CD4-positive, alpha-beta memory T cell (primary cell): ENCODE measurements at regions of chr16 and their contacts with region 1.

Region 1: GRCh38 chr16:56281256-56281805 is 90.0 kb downstream of the GNAO1 start:
- DNase-seq: no peak
- H3K4me3 ChIP-seq: no peak overlapping the region
- H3K4me3 Mint-ChIP-seq: no peak overlapping the region
- H3K27ac ChIP-seq: no peak overlapping the region
- H3K27ac Mint-ChIP-seq: peak overlapping the region in 4 of 7 donors; percentile 35 to 74 (median 58)
- H3K4me1 ChIP-seq: peaks cover 38% of the 10 kb centered on the region
- H3K4me1 Mint-ChIP-seq: peaks cover 26 to 44% (median 36%) of the 10 kb centered on the region in 4 donors
- H3K27me3 ChIP-seq: no peaks in the 10 kb centered on the region
- H3K27me3 Mint-ChIP-seq: no peaks in the 10 kb centered on the region

Region 2: DNA sequence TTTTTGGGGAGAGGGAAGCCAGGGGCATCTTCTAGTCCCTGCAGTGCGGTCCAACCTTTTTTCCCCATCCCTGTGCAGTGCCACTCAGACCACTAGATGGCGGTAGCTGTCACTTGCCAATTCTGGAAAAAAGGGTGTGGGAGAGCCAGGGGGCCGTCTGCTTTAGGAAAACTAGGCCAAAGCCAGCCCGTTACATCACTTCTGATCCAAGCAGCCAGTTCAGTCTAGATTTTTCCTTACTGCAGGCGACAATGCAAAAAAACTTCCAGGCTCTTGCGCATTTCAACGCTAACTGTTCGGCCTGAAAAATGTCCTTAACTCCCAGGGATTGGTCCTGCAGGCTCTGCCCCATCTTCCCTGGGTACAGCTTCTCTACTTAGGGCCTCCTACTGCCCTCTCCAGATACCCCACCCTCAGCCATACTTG is 336.9 kb before region 1 on chr16:
- CTCF ChIA-PET with region 1: interaction called, 15 read pairs
- POLR2A ChIA-PET with region 1: no interaction called
- intact Hi-C with region 1: no loop called
- DNase-seq: peak; percentile 40 to 48 (median 44)
- H3K4me3 ChIP-seq: no peak overlapping the region
- H3K4me3 Mint-ChIP-seq: no peak overlapping the region
- H3K27ac ChIP-seq: no peak overlapping the region
- H3K27ac Mint-ChIP-seq: no peak overlapping the region
- H3K4me1 ChIP-seq: no peaks in the 10 kb centered on the region
- H3K4me1 Mint-ChIP-seq: peaks cover 0 to 2% (median 0%) of the 10 kb centered on the region in 4 donors
- H3K27me3 ChIP-seq: no peaks in the 10 kb centered on the region
- H3K27me3 Mint-ChIP-seq: peaks cover 39 to 40% of the 10 kb centered on the region in 2 donors

Region 3: GRCh38 chr16:56041686-56042085 is 239.6 kb before region 1 on chr16:
- CTCF ChIA-PET with region 1: interaction called, 19 read pairs
- POLR2A ChIA-PET with region 1: no interaction called
- intact Hi-C with region 1: no loop called
- DNase-seq: peak in 4 of 5 donors; percentile 25 to 47 (median 36)
- H3K4me3 ChIP-seq: no peak overlapping the region
- H3K4me3 Mint-ChIP-seq: no peak overlapping the region
- H3K27ac ChIP-seq: no peak overlapping the region
- H3K27ac Mint-ChIP-seq: no peak overlapping the region
- H3K4me1 ChIP-seq: no peaks in the 10 kb centered on the region
- H3K4me1 Mint-ChIP-seq: no peaks in the 10 kb centered on the region
- H3K27me3 ChIP-seq: no peaks in the 10 kb centered on the region
- H3K27me3 Mint-ChIP-seq: peaks cover 0 to 4% of the 10 kb centered on the region in 2 donors

Region 4: GRCh38 chr16:56137269-56137668 is 144.1 kb before region 1 on chr16:
- CTCF ChIA-PET with region 1: no interaction called
- POLR2A ChIA-PET with region 1: no interaction called
- intact Hi-C with region 1: no loop called
- DNase-seq: no peak
- H3K4me3 ChIP-seq: no peak overlapping the region
- H3K4me3 Mint-ChIP-seq: peak overlapping the region; percentile 7 to 68 (median 36)
- H3K27ac ChIP-seq: no peak overlapping the region
- H3K27ac Mint-ChIP-seq: peak overlapping the region in 2 of 7 donors; percentile 3 to 15
- H3K4me1 ChIP-seq: peaks cover 6% of the 10 kb centered on the region
- H3K4me1 Mint-ChIP-seq: peaks cover 7 to 9% (median 8%) of the 10 kb centered on the region in 4 donors
- H3K27me3 ChIP-seq: no peaks in the 10 kb centered on the region
- H3K27me3 Mint-ChIP-seq: peaks cover 0 to 3% of the 10 kb centered on the region in 2 donors

Region 5: DNA sequence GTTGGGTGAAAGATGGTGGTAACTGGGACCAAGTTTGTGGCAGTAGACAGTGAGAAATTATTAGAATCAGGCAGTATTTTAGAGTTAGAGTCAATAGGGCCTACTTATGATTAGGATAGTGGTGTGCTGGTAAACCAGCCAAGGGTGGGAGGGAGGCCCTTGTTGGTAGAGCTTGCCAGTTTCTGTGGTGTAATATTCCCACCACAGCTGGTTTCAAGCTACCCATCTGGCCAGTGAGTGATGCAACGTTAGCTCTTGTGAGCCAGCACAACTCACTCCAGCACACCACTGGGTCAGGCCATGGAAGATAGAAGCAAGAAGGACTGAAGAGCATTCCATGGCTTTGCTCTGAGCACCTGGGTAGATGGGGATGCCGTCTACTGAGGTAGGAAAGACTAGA is 55.1 kb before region 1 on chr16:
- CTCF ChIA-PET with region 1: interaction called, 9 read pairs
- POLR2A ChIA-PET with region 1: interaction called, 3 read pairs
- intact Hi-C with region 1: loop called (anchors 5 kb)
- DNase-seq: no peak
- H3K4me3 ChIP-seq: no peak overlapping the region
- H3K4me3 Mint-ChIP-seq: peak overlapping the region in 7 of 8 donors; percentile 73 to 90 (median 84)
- H3K27ac ChIP-seq: no peak overlapping the region
- H3K27ac Mint-ChIP-seq: peak overlapping the region; percentile 73 to 94 (median 83)
- H3K4me1 ChIP-seq: peaks cover 38% of the 10 kb centered on the region
- H3K4me1 Mint-ChIP-seq: peaks cover 35 to 49% (median 41%) of the 10 kb centered on the region in 4 donors
- H3K27me3 ChIP-seq: no peaks in the 10 kb centered on the region
- H3K27me3 Mint-ChIP-seq: no peaks in the 10 kb centered on the region

Region 6: DNA sequence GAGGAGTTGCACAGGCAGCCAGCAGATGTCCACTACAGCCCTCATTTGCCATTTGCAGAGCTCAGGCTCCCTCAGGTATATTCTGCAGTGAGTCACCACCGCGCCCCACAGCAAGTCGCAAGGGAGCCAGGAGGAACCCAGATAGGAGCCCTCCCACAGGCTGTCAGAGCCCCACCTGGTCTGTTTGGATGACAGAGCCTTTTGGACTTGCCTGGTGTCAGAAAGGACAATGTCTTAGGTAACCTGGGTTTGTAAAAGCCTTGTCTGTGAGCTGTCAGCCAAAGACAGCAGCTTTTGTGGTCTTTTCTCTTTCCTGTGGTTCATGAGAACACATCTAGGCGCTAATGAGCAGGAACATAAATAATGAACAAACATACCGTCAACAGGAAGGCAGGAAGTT is 19.2 kb before region 1 on chr16:
- CTCF ChIA-PET with region 1: interaction called, 57 read pairs
- POLR2A ChIA-PET with region 1: interaction called, 78 read pairs
- intact Hi-C with region 1: loop called (anchors 1 kb)
- DNase-seq: peak; percentile 74 to 88 (median 84)
- H3K4me3 ChIP-seq: peak overlapping the region; percentile 2 to 45
- H3K4me3 Mint-ChIP-seq: peak overlapping the region; percentile 47 to 82 (median 65)
- H3K27ac ChIP-seq: peak overlapping the region; percentile 45
- H3K27ac Mint-ChIP-seq: peak overlapping the region; percentile 77 to 97 (median 89)
- H3K4me1 ChIP-seq: peaks cover 59% of the 10 kb centered on the region
- H3K4me1 Mint-ChIP-seq: peaks cover 36 to 75% (median 52%) of the 10 kb centered on the region in 4 donors
- H3K27me3 ChIP-seq: no peaks in the 10 kb centered on the region
- H3K27me3 Mint-ChIP-seq: no peaks in the 10 kb centered on the region

Region 7: DNA sequence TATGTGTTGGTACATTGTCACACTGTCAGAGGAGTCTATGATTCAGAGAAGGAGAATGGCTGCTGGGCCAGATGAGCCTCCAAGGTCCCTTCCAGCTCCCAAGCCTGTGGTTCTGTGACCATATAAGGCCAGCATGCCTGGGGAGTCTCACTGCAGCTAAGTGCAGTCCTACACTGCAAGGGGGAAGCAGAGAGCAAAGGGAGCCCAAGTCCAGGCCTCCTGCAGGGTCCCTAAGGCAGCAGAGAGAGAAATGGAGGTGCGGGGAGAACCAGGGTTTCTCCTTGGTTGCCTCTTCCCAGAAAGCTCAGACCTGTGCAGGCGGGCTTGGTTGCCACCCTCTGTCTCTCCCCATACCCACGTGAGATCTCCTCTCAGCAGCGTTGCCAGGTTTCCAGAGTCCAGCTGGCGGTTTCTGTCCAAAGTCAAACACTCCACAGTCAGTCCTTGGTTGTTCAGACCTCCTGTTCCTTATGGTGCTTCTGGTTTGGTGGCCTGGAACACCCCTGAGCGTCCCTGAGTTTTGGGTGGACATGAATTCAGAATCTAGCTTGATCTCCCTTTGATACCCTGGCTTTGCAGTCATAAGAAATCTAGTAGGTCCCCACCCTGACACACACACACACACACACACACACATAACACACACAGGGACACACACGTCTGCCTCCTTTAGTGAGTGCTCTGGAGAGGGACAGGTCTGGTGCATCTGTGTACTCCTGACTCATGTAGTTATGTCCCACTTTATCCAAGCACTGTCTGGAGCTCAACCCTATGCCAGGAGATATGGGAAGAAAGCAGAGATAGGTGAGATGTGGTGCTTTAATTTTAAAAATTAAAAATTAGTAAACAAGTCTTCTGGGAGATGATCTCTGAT is 11.3 kb before region 1 on chr16:
- CTCF ChIA-PET with region 1: interaction called, 57 read pairs
- POLR2A ChIA-PET with region 1: interaction called, 78 read pairs
- intact Hi-C with region 1: no loop called
- DNase-seq: no peak
- H3K4me3 ChIP-seq: no peak overlapping the region
- H3K4me3 Mint-ChIP-seq: no peak overlapping the region
- H3K27ac ChIP-seq: no peak overlapping the region
- H3K27ac Mint-ChIP-seq: peak overlapping the region in 1 of 7 donors; percentile 27
- H3K4me1 ChIP-seq: peaks cover 3% of the 10 kb centered on the region
- H3K4me1 Mint-ChIP-seq: peaks cover 6 to 16% (median 10%) of the 10 kb centered on the region in 4 donors
- H3K27me3 ChIP-seq: no peaks in the 10 kb centered on the region
- H3K27me3 Mint-ChIP-seq: no peaks in the 10 kb centered on the region

Region 8: GRCh38 chr16:56309008-56309407 is 27.7 kb after region 1 on chr16:
- CTCF ChIA-PET with region 1: no interaction called
- POLR2A ChIA-PET with region 1: no interaction called
- intact Hi-C with region 1: no loop called
- DNase-seq: no peak
- H3K4me3 ChIP-seq: no peak overlapping the region
- H3K4me3 Mint-ChIP-seq: no peak overlapping the region
- H3K27ac ChIP-seq: no peak overlapping the region
- H3K27ac Mint-ChIP-seq: no peak overlapping the region
- H3K4me1 ChIP-seq: no peaks in the 10 kb centered on the region
- H3K4me1 Mint-ChIP-seq: peaks cover 0 to 6% (median under 1%) of the 10 kb centered on the region in 4 donors
- H3K27me3 ChIP-seq: no peaks in the 10 kb centered on the region
- H3K27me3 Mint-ChIP-seq: no peaks in the 10 kb centered on the region